Gastrocnemius medialis (tissue), 4 donors: ENCODE measurements at regions of chr10 and their contacts with region 1.

Region 1: DNA sequence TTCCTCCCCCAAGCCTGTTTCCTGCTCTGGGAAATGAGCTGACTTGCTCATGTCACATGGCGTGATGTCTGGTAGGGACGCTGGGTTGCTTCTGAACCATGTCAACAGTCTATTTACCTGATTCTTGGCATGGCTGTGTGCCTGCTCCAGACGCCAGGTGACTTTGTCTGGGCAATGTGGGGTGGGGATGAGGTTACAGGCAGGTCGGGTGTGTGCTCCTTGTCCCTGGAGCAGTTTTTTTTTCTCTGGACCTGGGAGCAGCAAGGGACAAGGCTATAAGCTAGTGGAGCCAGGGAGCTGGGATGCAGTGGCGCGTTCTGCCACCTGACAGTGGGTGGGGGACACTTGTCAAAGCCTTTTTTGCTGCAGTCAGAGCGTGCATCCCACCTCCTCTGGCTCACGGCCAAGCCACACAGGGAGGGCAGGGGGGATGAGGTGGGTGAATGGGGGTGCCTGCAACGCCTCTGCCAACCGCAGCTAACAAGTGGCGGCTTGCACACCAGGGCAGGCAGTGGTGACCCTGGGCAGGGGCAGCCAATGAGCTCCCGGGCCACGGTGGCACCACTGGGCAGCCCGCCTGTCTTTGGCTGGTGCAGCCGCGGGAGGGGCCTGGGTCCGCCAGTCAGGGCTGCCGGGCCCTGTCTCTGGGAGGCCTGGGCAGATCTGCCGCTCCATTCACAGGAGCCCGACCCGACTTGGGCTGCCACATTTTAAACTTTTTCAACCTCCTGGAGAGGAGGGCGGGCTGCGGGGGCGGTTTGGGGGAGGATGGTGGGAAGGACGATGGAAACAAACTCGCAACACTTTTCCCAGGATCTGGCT is 22.9 kb downstream of the DNAJB12 start:
- DNase-seq: peak; percentile 67 to 78
- ATAC-seq: peak; percentile 2 to 33
- H3K4me3 ChIP-seq: peak overlapping the region in 1 of 4 donors; percentile 1
- H3K27ac ChIP-seq: peak overlapping the region; percentile 85 to 95 (median 90)
- H3K4me1 ChIP-seq: peaks cover 73 to 76% of the 10 kb centered on the region in 2 donors
- H3K27me3 ChIP-seq: no peaks in the 10 kb centered on the region
- CTCF ChIP-seq: peak in 3 of 5 experiments; percentile 28 to 38 (median 35)
- POLR2A ChIP-seq: peak; percentile 13 to 39

Region 2: DNA sequence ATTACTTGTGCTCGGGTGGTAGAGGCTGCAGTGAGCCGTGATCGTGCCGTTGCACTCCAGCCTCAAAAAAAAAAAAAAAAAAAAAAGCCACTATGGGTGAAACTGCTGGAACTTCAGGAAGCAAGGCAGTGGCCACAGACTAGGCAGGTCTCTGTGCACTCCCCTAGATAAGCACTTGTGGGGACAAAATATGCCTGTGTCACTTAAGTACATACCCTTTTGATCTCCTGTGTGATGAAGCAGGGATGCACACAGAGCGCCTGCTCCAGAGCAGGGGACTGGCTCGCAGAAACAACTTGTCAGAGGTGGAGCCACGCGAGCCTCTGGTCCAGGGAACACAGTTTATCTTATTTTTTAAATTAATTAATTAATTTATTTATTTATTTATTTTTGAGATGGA is 437.9 kb before region 1 on chr10:
- in situ Hi-C with region 1: no loop called
- intact Hi-C with region 1: loop called (anchors 10 kb)
- DNase-seq: no peak
- ATAC-seq: no peak
- H3K4me3 ChIP-seq: no peak overlapping the region
- H3K27ac ChIP-seq: no peak overlapping the region
- H3K4me1 ChIP-seq: peaks cover 5 to 7% of the 10 kb centered on the region in 2 donors
- H3K27me3 ChIP-seq: no peaks in the 10 kb centered on the region
- CTCF ChIP-seq: no peak
- POLR2A ChIP-seq: no peak

Region 3: GRCh38 chr10:71963756-71964668 is 367.8 kb before region 1 on chr10 and contains the start of gene CHST3:
- in situ Hi-C with region 1: loop called (anchors 10 to 25 kb)
- intact Hi-C with region 1: no loop called
- DNase-seq: peak in 1 of 2 donors; percentile 62
- ATAC-seq: peak; percentile 49 to 55
- H3K4me3 ChIP-seq: peak within 1 kb of the TSS; percentile 73 to 83 (median 79)
- H3K27ac ChIP-seq: peak within 1 kb of the TSS; percentile 96 to 99 (median 97)
- H3K4me1 ChIP-seq: peaks cover 42 to 52% of the 10 kb centered on the region in 2 donors
- H3K27me3 ChIP-seq: no peaks in the 10 kb centered on the region
- CTCF ChIP-seq: peak in 1 of 5 experiments; percentile 17
- POLR2A ChIP-seq: peak; percentile 37 to 49
- total RNA-seq, gene CHST3: 11.5 to 31.6 (median 16.3) TPM

Region 4: DNA sequence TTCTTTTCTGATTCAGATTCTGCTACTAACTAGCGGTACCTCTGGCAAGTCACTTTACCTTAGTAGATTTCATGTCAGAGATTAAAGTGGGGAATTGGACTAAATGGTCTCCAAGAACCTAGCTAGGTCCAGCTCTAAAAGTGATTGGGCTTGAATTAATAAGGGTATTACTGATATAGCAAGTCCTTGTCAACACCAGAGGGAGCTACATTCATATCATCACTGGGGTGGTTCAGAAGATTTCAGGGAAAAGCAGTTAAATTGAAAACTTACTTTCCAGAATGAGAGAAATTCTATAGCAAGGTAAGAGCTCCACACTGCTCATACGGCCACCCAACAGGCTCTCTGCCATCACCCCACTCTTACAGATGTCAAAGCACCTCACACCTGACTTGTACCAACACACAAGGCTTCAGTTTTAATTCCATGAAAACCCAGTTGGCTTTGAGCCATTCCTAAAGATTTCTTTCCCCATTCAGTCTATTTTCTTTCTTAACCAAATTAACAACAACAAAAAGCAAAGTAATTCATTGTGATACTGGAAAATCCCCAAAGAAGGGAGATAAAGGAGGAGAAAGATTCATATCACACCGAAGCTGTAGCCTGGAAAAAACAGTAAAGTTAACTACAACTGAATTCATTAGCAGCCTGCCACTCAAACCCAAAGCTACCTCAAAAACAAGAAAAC is 205.5 kb before region 1 on chr10:
- in situ Hi-C with region 1: loop called (anchors 5 to 25 kb)
- intact Hi-C with region 1: loop called (anchors 2 kb)
- DNase-seq: no peak
- ATAC-seq: peak in 1 of 2 donors; percentile 24
- H3K4me3 ChIP-seq: no peak overlapping the region
- H3K27ac ChIP-seq: no peak overlapping the region
- H3K4me1 ChIP-seq: peaks cover 0 to 7% of the 10 kb centered on the region in 2 donors
- H3K27me3 ChIP-seq: no peaks in the 10 kb centered on the region
- CTCF ChIP-seq: peak; percentile 28 to 47 (median 46)
- POLR2A ChIP-seq: no peak

Region 5: DNA sequence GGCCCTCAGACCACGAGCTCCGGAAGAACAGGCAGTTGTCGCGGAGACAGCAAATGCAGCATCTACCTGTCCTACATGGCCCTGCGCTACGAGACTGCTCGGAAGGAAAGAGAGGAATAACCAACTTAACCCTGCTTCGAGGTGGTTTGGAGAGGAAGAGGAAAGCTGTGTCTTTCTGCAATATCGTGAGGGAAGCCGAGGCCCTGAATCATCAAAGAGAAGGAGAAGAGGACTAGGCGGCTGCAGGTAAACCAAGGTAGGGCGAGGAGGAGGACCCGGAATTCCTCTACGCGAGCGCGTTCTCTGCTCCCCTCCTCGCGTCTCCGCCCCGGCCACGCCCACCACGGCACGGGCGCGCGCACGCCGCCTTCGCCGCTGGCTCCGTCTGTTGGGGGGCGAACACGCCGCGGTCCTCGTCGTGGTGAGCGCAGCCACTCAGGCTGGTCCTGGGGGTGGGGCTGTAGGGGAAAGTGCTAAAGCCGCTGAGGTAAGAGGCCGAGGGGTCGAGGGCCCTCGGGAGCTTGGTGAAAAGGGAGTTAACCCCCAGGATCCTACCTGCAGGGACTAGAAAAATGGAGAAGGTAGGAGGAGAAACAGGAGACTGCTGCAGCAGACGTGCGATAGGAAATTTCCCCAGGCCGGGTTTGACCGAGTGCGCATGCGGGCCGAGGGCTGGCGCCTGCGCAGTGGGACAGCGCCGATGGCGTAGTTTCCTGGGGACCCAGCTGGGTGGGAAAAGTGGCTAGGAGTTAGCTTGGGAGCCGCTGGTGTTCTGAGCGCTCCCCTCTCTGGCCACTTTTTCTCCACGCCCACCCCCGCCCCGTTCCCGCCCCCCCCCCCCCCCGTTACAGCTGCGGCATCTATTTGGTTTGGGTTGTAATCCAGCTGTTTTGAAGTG is 115.9 kb before region 1 on chr10 and contains the starts of genes ANAPC16 and ASCC1:
- in situ Hi-C with region 1: loop called in 2 of 4 experiments (anchors 10 to 25 kb)
- intact Hi-C with region 1: loop called (anchors 2 kb)
- DNase-seq: peak; percentile 83 to 89
- ATAC-seq: peak; percentile 92 to 94
- H3K4me3 ChIP-seq: peak within 1 kb of the TSS; percentile 72 to 91 (median 81)
- H3K27ac ChIP-seq: peak within 1 kb of the TSS; percentile 94 to 99 (median 98)
- H3K4me1 ChIP-seq: peaks cover 55 to 56% of the 10 kb centered on the region in 2 donors
- H3K27me3 ChIP-seq: no peaks in the 10 kb centered on the region
- CTCF ChIP-seq: no peak
- POLR2A ChIP-seq: peak; percentile 91 to 96
- total RNA-seq, gene ANAPC16: 70.9 to 168 (median 105) TPM
- total RNA-seq, gene ASCC1: 26.1 to 31.1 (median 29.6) TPM